ENCODE measurements at regions of chr20 and their contacts with region 1.

Region 1: GRCh38 chr20:5749952-5750779 is at the start of gene SHLD1:
- DNase-seq: peak; percentile 61
- ATAC-seq: peak; percentile 97
- H3K4me3 Mint-ChIP-seq: peak within 1 kb of the TSS; percentile 99
- H3K27ac Mint-ChIP-seq: peak within 1 kb of the TSS; percentile 99
- H3K4me1 Mint-ChIP-seq: peaks cover 22% of the 10 kb centered on the region
- H3K27me3 Mint-ChIP-seq: no peaks in the 10 kb centered on the region
- CTCF ChIP-seq: no peak
- total RNA-seq, gene SHLD1: 11.7 and 15.0 TPM in 2 replicates

Region 2: GRCh38 chr20:5652626-5653553 is 97.3 kb before region 1 on chr20:
- CTCF ChIA-PET with region 1: no interaction called
- POLR2A ChIA-PET with region 1: interaction called, 13 read pairs
- intact Hi-C with region 1: loop called (anchors 1 kb)
- DNase-seq: no peak
- ATAC-seq: peak; percentile 21
- H3K4me3 Mint-ChIP-seq: peak overlapping the region; percentile 64
- H3K27ac Mint-ChIP-seq: peak overlapping the region; percentile 92
- H3K4me1 Mint-ChIP-seq: peaks cover 84% of the 10 kb centered on the region
- H3K27me3 Mint-ChIP-seq: no peaks in the 10 kb centered on the region
- CTCF ChIP-seq: no peak

Region 3: GRCh38 chr20:5674176-5674660 is 75.9 kb before region 1 on chr20:
- CTCF ChIA-PET with region 1: no interaction called
- POLR2A ChIA-PET with region 1: no interaction called
- intact Hi-C with region 1: loop called (anchors 2 kb)
- DNase-seq: no peak
- ATAC-seq: peak; percentile 87
- H3K4me3 Mint-ChIP-seq: peak overlapping the region; percentile 13
- H3K27ac Mint-ChIP-seq: peak overlapping the region; percentile 77
- H3K4me1 Mint-ChIP-seq: peaks cover 30% of the 10 kb centered on the region
- H3K27me3 Mint-ChIP-seq: no peaks in the 10 kb centered on the region
- CTCF ChIP-seq: no peak

Region 4: GRCh38 chr20:5731753-5732366 is 18.3 kb before region 1 on chr20:
- CTCF ChIA-PET with region 1: no interaction called
- POLR2A ChIA-PET with region 1: no interaction called
- intact Hi-C with region 1: no loop called
- DNase-seq: no peak
- ATAC-seq: no peak
- H3K4me3 Mint-ChIP-seq: no peak overlapping the region
- H3K27ac Mint-ChIP-seq: no peak overlapping the region
- H3K4me1 Mint-ChIP-seq: peaks cover 7% of the 10 kb centered on the region
- H3K27me3 Mint-ChIP-seq: peaks cover 69% of the 10 kb centered on the region
- CTCF ChIP-seq: no peak

Region 5: GRCh38 chr20:5788385-5788895 is 38.3 kb after region 1 on chr20:
- CTCF ChIA-PET with region 1: interaction called, 8 read pairs
- POLR2A ChIA-PET with region 1: no interaction called
- intact Hi-C with region 1: loop called (anchors 1 kb)
- DNase-seq: no peak
- ATAC-seq: peak; percentile 99
- H3K4me3 Mint-ChIP-seq: no peak overlapping the region
- H3K27ac Mint-ChIP-seq: no peak overlapping the region
- H3K4me1 Mint-ChIP-seq: peaks cover 15% of the 10 kb centered on the region
- H3K27me3 Mint-ChIP-seq: no peaks in the 10 kb centered on the region
- CTCF ChIP-seq: no peak

Region 6: DNA sequence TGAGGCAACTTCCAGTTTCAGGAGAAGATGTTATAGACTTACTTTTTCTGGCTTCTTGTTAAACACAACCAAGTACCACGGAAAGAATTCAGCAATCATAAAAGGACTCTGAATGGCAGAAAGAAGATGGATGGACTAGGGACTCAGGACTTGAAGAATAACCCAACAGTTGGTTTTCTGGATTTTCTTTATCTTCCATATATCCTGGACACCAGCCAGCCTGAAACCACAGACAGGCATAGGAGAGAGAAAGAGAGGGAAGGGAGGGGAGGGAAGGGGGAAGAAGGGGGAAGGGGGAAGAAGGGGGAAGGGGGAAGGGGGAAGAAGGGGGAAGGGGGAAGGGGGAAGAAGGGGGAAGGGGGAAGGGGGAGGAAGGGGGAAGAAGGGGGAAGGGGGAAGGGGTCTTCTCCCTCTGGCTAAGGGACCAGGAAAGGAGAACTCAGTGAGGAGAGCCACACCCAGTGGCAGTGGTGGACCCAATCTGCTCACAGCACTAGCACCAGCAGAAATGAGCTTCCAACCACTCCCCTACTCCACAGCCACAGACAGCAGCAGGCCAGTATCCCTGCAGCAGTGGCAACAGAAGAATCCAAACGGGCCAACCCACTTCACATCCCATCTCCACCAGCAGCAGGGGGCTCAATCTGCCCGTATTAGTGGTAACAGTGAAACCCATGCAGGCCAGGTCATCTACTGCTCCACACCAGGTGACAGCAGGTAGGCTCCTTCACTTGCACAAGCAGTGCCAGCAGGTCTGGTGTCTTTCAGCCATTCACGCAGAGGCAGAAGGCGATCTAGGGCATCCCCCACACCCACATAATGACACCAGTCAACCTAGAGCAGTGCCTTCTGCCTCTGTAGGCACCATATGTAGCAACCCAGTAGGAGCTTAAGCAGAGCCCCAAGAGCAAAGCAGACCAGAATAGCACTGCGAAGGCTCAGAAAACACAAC is 121.6 kb after region 1 on chr20:
- CTCF ChIA-PET with region 1: no interaction called
- POLR2A ChIA-PET with region 1: no interaction called
- intact Hi-C with region 1: no loop called
- DNase-seq: no peak
- ATAC-seq: no peak
- H3K4me3 Mint-ChIP-seq: no peak overlapping the region
- H3K27ac Mint-ChIP-seq: no peak overlapping the region
- H3K4me1 Mint-ChIP-seq: no peaks in the 10 kb centered on the region
- H3K27me3 Mint-ChIP-seq: peaks cover 6% of the 10 kb centered on the region
- CTCF ChIP-seq: no peak

Region 7: GRCh38 chr20:5950271-5951031 is 200.3 kb after region 1 on chr20 and contains the starts of genes MCM8 and TRMT6:
- CTCF ChIA-PET with region 1: no interaction called
- POLR2A ChIA-PET with region 1: no interaction called
- intact Hi-C with region 1: loop called (anchors 1 kb)
- DNase-seq: peak; percentile 94
- ATAC-seq: peak; percentile 97
- H3K4me3 Mint-ChIP-seq: peak within 1 kb of the TSS; percentile 93
- H3K27ac Mint-ChIP-seq: peak within 1 kb of the TSS; percentile 90
- H3K4me1 Mint-ChIP-seq: peaks cover 34% of the 10 kb centered on the region
- H3K27me3 Mint-ChIP-seq: no peaks in the 10 kb centered on the region
- CTCF ChIP-seq: no peak
- total RNA-seq, gene MCM8: 12.9 and 13.0 TPM in 2 replicates
- total RNA-seq, gene TRMT6: 21.0 and 25.5 TPM in 2 replicates

Measured in activated B cell treated with CpG ODN at 0.5 μM for 24 hours (primary cell).